Activated B cell treated with CpG ODN at 0.5 μM for 24 hours (primary cell): ENCODE measurements at regions of chr11 and their contacts with region 1.

Region 1: GRCh38 chr11:59053387-59053786 is 32.7 kb upstream of the GLYATL1B start:
- DNase-seq: peak; percentile 45
- ATAC-seq: no peak
- H3K4me3 Mint-ChIP-seq: no peak overlapping the region
- H3K27ac Mint-ChIP-seq: peak overlapping the region; percentile 66
- H3K4me1 Mint-ChIP-seq: peaks cover 73% of the 10 kb centered on the region
- H3K27me3 Mint-ChIP-seq: no peaks in the 10 kb centered on the region
- CTCF ChIP-seq: no peak

Region 2: GRCh38 chr11:58654079-58654907 is 399.1 kb before region 1 on chr11:
- CTCF ChIA-PET with region 1: interaction called, 11 read pairs
- POLR2A ChIA-PET with region 1: no interaction called
- intact Hi-C with region 1: loop called (anchors 1 kb)
- DNase-seq: peak; percentile 69
- ATAC-seq: peak; percentile 99
- H3K4me3 Mint-ChIP-seq: no peak overlapping the region
- H3K27ac Mint-ChIP-seq: no peak overlapping the region
- H3K4me1 Mint-ChIP-seq: peaks cover 5% of the 10 kb centered on the region
- H3K27me3 Mint-ChIP-seq: no peaks in the 10 kb centered on the region
- CTCF ChIP-seq: peak; percentile 25

Region 3: GRCh38 chr11:58788355-58789023 is 264.9 kb before region 1 on chr11:
- CTCF ChIA-PET with region 1: no interaction called
- POLR2A ChIA-PET with region 1: no interaction called
- intact Hi-C with region 1: loop called (anchors 5 kb)
- DNase-seq: no peak
- ATAC-seq: peak; percentile 73
- H3K4me3 Mint-ChIP-seq: no peak overlapping the region
- H3K27ac Mint-ChIP-seq: no peak overlapping the region
- H3K4me1 Mint-ChIP-seq: no peaks in the 10 kb centered on the region
- H3K27me3 Mint-ChIP-seq: peaks cover 3% of the 10 kb centered on the region
- CTCF ChIP-seq: no peak

Region 4: DNA sequence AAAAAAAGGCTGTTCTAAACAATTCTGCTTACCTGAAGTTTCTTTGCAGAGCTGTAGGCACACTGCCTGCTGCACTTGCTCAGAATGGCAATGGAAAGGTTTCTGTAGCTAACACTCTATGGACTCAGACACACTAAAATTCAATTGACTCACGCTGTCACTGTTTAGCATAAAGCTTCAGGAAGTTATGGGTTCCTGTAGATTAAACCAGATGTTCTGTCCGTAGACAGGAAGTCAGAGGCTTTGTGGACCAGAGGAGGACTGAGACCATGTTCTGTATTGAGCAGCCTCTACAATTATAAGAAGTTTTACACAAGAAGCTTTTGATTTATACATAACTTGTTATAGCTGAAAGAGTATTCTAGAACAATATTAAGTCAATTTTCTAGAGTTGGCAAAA is 43.7 kb before region 1 on chr11:
- CTCF ChIA-PET with region 1: interaction called, 5 read pairs
- POLR2A ChIA-PET with region 1: no interaction called
- intact Hi-C with region 1: loop called (anchors 10 kb)
- DNase-seq: no peak
- ATAC-seq: peak; percentile 79
- H3K4me3 Mint-ChIP-seq: peak overlapping the region; percentile 6
- H3K27ac Mint-ChIP-seq: peak overlapping the region; percentile 68
- H3K4me1 Mint-ChIP-seq: peaks cover 52% of the 10 kb centered on the region
- H3K27me3 Mint-ChIP-seq: no peaks in the 10 kb centered on the region
- CTCF ChIP-seq: no peak

Region 5: DNA sequence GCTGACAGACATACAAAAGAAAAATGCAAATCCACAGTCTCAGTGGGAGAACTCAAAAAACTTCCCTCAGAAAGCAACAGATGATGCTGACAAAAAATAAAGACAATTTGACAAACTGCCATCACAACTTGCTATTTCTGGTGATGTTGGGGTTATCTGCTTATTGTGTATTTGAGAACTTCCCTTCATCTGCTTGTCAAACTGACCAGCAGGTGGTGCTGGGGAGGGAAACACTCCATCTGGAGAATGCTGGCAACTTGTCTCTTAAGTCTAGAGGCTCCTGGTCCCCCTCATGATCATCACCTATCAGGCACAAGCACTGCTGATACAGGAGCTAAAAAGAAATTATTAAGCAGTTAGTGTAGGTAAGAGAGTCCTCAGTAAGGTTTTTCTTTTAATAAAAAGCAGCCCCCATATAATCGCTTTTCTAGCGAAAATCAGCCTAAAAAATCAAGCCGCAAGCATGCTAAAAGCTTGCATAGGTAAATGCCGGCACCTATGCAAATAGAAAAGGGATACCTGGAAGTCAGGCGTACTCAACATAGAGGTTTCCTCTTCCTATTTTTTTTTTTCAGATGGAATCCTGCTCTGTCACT is 43.8 kb after region 1 on chr11:
- CTCF ChIA-PET with region 1: interaction called, 19 read pairs
- POLR2A ChIA-PET with region 1: interaction called, 28 read pairs
- intact Hi-C with region 1: loop called (anchors 1 kb)
- DNase-seq: no peak
- ATAC-seq: peak; percentile 23
- H3K4me3 Mint-ChIP-seq: peak overlapping the region; percentile 73
- H3K27ac Mint-ChIP-seq: peak overlapping the region; percentile 91
- H3K4me1 Mint-ChIP-seq: peaks cover 91% of the 10 kb centered on the region
- H3K27me3 Mint-ChIP-seq: no peaks in the 10 kb centered on the region
- CTCF ChIP-seq: no peak

Region 6: GRCh38 chr11:59135648-59136461 is 82.5 kb after region 1 on chr11:
- CTCF ChIA-PET with region 1: interaction called, 38 read pairs
- POLR2A ChIA-PET with region 1: interaction called, 11 read pairs
- intact Hi-C with region 1: loop called (anchors 1 kb)
- DNase-seq: peak; percentile 85
- ATAC-seq: peak; percentile 98
- H3K4me3 Mint-ChIP-seq: peak overlapping the region; percentile 69
- H3K27ac Mint-ChIP-seq: peak overlapping the region; percentile 88
- H3K4me1 Mint-ChIP-seq: peaks cover 25% of the 10 kb centered on the region
- H3K27me3 Mint-ChIP-seq: no peaks in the 10 kb centered on the region
- CTCF ChIP-seq: peak; percentile 91

Region 7: DNA sequence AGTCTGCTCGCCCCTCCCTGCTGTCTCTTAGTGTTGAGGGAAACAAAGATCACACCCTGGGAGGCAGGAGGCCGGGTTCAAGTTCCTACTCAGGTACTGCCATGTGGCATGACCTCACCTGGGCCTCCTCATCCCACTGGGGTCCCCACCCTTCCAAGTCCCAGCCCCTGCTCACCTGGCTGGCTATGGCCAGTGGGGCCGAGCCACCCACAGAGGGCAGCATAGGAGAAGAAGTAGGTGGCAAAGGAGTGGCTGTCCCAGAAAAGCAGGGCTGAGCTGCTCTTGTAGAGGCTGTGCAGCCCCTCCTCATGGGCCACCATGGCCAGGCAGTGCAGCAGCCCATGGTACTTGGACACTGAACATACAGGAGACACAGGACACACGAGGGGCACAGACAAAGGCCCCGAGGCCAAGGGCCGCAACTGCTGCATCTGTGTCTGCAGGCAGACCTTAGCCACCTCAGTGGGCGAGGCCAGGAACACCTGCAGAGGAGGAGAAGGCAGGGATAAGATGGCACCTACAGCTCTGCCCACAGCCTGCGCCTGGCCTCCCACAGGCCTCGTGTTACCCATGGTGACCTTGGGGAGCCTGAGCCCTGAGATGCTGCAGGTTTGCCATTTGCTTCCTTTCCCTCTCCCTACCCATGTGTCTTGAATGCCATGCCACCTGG is 210.0 kb after region 1 on chr11:
- CTCF ChIA-PET with region 1: no interaction called
- POLR2A ChIA-PET with region 1: no interaction called
- intact Hi-C with region 1: no loop called
- DNase-seq: peak; percentile 52
- ATAC-seq: peak; percentile 65
- H3K4me3 Mint-ChIP-seq: no peak overlapping the region
- H3K27ac Mint-ChIP-seq: no peak overlapping the region
- H3K4me1 Mint-ChIP-seq: peaks cover 71% of the 10 kb centered on the region
- H3K27me3 Mint-ChIP-seq: no peaks in the 10 kb centered on the region
- CTCF ChIP-seq: no peak

Region 8: DNA sequence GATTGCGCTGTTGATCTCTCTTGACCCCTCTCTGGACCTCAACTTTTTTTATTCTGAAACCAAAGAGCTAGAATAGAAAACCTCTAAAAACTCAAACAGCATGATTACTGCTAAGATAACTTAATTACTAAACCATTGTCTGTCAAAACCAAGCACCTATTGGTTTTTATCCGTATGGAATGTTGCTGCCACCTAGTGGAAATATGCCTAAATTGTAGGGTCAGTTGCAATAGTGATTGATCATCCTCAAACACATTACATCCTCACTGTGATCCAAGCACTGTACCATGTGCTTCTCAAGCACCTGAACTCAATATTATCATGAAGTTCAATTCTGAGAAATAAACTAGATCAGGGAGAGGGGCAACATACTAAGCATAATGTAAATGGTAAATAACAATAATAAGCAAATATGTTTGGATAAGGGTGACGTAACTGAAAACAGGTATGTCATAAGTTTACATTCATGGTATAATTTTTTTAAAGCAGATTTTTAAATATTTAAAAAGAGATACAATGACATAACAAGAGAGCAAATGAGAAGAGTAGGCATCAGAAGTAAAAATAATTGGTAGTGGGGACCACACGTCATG is 376.6 kb after region 1 on chr11:
- CTCF ChIA-PET with region 1: no interaction called
- POLR2A ChIA-PET with region 1: no interaction called
- intact Hi-C with region 1: loop called (anchors 10 kb)
- DNase-seq: no peak
- ATAC-seq: peak; percentile 87
- H3K4me3 Mint-ChIP-seq: no peak overlapping the region
- H3K27ac Mint-ChIP-seq: no peak overlapping the region
- H3K4me1 Mint-ChIP-seq: no peaks in the 10 kb centered on the region
- H3K27me3 Mint-ChIP-seq: peaks cover 9% of the 10 kb centered on the region
- CTCF ChIP-seq: peak; percentile 50

Region 9: GRCh38 chr11:59647245-59647980 is 594.0 kb after region 1 on chr11:
- CTCF ChIA-PET with region 1: no interaction called
- POLR2A ChIA-PET with region 1: no interaction called
- intact Hi-C with region 1: no loop called
- DNase-seq: no peak
- ATAC-seq: no peak
- H3K4me3 Mint-ChIP-seq: no peak overlapping the region
- H3K27ac Mint-ChIP-seq: no peak overlapping the region
- H3K4me1 Mint-ChIP-seq: no peaks in the 10 kb centered on the region
- H3K27me3 Mint-ChIP-seq: no peaks in the 10 kb centered on the region
- CTCF ChIP-seq: no peak